MCF 10A (cell line): ENCODE measurements at regions of chr20 and their contacts with region 1.

Region 1: DNA sequence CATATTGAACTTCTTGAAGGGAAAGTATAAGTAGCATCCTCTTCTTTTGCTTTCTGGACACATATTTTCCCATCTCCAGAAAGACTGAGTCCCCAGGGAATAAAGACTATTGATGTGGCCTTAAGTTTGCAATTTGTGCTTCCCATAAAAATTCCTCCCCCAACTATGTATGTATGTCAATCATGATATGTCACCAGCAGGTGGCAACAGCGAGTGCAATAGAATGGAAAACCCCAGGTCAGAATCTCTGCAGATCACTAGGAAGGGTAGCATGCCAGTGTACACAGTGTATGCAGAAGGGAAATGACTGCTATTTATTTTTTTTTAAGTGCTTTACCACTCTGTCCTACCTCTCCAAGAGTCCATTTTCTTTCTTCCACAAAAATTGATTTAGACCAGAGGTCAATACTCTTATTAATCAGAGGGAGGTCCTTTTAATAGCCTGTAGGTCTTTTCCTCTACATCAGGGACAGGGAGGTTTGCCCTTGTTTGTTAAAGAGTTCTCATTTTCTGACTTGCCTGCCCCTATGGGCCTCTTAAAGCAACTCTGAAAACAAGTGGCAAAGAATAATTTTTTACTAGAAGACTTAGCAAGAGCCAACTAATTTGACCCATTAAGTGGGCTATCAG is 61.4 kb downstream of the BMP2 start:
- DNase-seq: peak; percentile 82
- H3K4me3 Mint-ChIP-seq: no peak overlapping the region
- H3K27ac Mint-ChIP-seq: no peak overlapping the region
- H3K4me1 Mint-ChIP-seq: no peaks in the 10 kb centered on the region
- H3K27me3 Mint-ChIP-seq: no peaks in the 10 kb centered on the region
- CTCF ChIP-seq: peak; percentile 47

Region 2: DNA sequence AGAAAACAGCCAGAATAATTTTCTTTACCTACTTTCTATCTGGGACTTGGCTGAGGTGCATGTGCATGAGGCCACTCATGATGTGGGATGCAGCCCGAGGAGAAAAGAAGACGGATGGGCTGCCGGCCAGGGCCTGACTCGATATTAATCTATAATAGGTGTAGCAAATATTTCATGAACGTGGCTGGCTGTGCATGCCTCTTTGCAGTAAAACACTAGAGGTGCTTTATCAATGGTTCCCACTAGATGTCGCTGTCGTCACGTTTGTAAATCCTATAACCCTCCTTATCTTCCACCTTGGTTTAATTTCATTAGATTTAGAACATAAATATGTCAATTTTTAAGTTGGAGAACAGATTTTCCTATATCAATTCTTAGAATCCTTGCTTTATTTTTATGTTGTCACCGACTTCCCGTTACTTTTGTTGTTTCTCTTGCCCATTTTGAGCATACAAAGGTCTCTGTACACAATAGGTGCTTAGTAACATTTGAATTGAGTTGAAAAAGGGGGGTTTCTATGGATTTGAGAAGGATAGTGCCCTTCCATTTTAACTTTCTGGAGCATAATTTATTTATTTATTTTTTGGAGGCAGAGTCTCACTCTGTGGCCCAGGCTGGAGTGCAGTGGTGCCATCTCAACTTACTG is 686.4 kb before region 1 on chr20:
- CTCF ChIA-PET with region 1: interaction called, 4 read pairs
- POLR2A ChIA-PET with region 1: no interaction called
- intact Hi-C with region 1: loop called (anchors 10 kb)
- DNase-seq: peak; percentile 71
- H3K4me3 Mint-ChIP-seq: no peak overlapping the region
- H3K27ac Mint-ChIP-seq: no peak overlapping the region
- H3K4me1 Mint-ChIP-seq: no peaks in the 10 kb centered on the region
- H3K27me3 Mint-ChIP-seq: peaks cover 1% of the 10 kb centered on the region
- CTCF ChIP-seq: peak; percentile 79

Region 3: GRCh38 chr20:6651016-6651415 is 177.9 kb before region 1 on chr20:
- CTCF ChIA-PET with region 1: no interaction called
- POLR2A ChIA-PET with region 1: no interaction called
- intact Hi-C with region 1: no loop called
- DNase-seq: peak; percentile 99
- H3K4me3 Mint-ChIP-seq: no peak overlapping the region
- H3K27ac Mint-ChIP-seq: peak overlapping the region; percentile 46
- H3K4me1 Mint-ChIP-seq: peaks cover 34% of the 10 kb centered on the region
- H3K27me3 Mint-ChIP-seq: no peaks in the 10 kb centered on the region
- CTCF ChIP-seq: no peak

Region 4: DNA sequence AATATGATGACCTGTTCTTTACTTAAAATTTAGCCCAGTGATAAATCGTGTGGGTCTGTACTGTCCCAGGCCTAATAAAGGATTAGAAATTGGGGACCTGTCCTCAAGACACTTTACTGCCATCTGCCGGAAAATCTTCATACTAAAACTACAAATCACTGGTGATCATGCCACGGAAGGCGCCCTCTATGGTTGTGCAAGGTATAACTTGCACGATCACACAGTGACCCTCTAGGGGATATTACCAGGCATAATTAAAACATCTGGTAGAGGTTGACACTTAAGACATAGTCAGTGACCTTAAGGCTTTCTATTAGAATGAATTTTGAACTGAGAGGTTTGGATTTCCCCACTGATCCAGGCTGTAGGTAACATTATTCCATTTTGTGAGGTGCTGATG is 111.1 kb after region 1 on chr20:
- CTCF ChIA-PET with region 1: interaction called, 5 read pairs
- POLR2A ChIA-PET with region 1: interaction called, 4 read pairs
- intact Hi-C with region 1: loop called (anchors 10 kb)
- DNase-seq: peak; percentile 45
- H3K4me3 Mint-ChIP-seq: no peak overlapping the region
- H3K27ac Mint-ChIP-seq: peak overlapping the region; percentile 49
- H3K4me1 Mint-ChIP-seq: no peaks in the 10 kb centered on the region
- H3K27me3 Mint-ChIP-seq: no peaks in the 10 kb centered on the region
- CTCF ChIP-seq: peak; percentile 45

Region 5: GRCh38 chr20:7094438-7094997 is 265.6 kb after region 1 on chr20:
- CTCF ChIA-PET with region 1: interaction called, 21 read pairs
- POLR2A ChIA-PET with region 1: no interaction called
- intact Hi-C with region 1: loop called (anchors 1 kb)
- DNase-seq: peak; percentile 65
- H3K4me3 Mint-ChIP-seq: no peak overlapping the region
- H3K27ac Mint-ChIP-seq: no peak overlapping the region
- H3K4me1 Mint-ChIP-seq: no peaks in the 10 kb centered on the region
- H3K27me3 Mint-ChIP-seq: no peaks in the 10 kb centered on the region
- CTCF ChIP-seq: peak; percentile 63

Region 6: DNA sequence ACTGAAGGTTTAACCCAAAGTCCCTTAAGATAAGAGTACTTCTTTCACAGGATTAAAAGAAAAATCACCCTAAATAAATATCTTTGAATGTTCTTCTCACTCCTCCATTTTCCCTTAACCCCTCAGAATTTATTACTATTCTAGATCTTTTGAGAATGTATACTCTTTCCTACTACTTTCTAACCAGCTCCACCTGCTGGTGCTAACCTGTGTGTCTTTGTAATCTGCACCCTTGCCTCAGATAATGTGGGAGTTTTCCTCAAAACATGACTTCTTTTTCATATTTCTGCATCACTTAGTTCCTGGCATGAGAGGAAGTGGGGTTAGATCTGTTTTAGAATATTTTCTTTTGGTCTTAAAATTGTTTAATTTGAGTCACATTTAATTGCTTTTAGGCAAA is 332.8 kb after region 1 on chr20:
- CTCF ChIA-PET with region 1: interaction called, 21 read pairs
- POLR2A ChIA-PET with region 1: interaction called, 3 read pairs
- intact Hi-C with region 1: loop called (anchors 1 kb)
- DNase-seq: peak; percentile 45
- H3K4me3 Mint-ChIP-seq: no peak overlapping the region
- H3K27ac Mint-ChIP-seq: no peak overlapping the region
- H3K4me1 Mint-ChIP-seq: peaks cover 9% of the 10 kb centered on the region
- H3K27me3 Mint-ChIP-seq: no peaks in the 10 kb centered on the region
- CTCF ChIP-seq: peak; percentile 37

Region 7: GRCh38 chr20:7375905-7376304 is 547.0 kb after region 1 on chr20:
- CTCF ChIA-PET with region 1: interaction called, 18 read pairs
- POLR2A ChIA-PET with region 1: no interaction called
- intact Hi-C with region 1: loop called (anchors 2 kb)
- DNase-seq: peak; percentile 53
- H3K4me3 Mint-ChIP-seq: no peak overlapping the region
- H3K27ac Mint-ChIP-seq: no peak overlapping the region
- H3K4me1 Mint-ChIP-seq: no peaks in the 10 kb centered on the region
- H3K27me3 Mint-ChIP-seq: no peaks in the 10 kb centered on the region
- CTCF ChIP-seq: peak; percentile 35

Region 8: DNA sequence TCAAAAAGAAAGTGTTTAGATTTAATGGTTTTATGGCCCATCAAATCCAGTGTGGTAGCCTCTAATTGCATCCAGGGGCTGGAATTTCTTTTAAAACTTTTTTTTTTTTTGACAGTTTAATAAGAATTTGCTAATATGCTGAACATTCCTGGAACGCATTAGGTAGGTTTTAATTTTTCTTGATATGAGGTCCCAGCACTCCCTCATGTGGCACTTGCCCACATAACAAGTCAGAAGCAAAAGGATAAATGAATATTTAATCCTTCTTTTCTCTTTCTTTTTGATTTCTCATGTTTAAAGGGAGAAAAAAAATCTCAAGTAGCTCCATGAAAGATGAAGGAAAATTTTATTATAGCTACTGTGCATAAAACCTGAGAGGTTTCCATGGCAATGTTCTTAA is 1097.9 kb after region 1 on chr20:
- CTCF ChIA-PET with region 1: interaction called, 3 read pairs
- POLR2A ChIA-PET with region 1: no interaction called
- intact Hi-C with region 1: loop called (anchors 2 kb)
- DNase-seq: peak; percentile 50
- H3K4me3 Mint-ChIP-seq: no peak overlapping the region
- H3K27ac Mint-ChIP-seq: no peak overlapping the region
- H3K4me1 Mint-ChIP-seq: peaks cover 9% of the 10 kb centered on the region
- H3K27me3 Mint-ChIP-seq: no peaks in the 10 kb centered on the region
- CTCF ChIP-seq: peak; percentile 59